GM12878 (cell line): ENCODE measurements at regions of chr4 and their contacts with region 1.

Region 1: DNA sequence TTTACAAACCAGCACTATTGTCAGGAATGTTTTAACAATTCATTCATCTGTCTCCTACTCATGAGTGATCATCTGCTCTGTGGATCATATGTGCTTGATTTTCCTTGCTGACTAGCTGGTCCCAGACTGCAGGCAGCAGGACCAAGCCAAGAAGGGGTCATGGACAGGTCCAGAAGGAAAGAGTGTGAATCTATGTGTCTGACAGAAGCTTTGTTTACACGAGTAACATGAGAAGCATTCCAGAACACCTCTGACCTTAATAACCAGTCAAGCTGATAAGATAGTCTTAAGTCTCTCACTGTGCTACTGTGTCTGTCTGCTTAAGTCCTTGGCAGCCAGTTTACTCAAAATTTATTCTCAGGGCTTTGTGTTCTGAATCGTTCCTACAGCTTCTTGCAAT is 39.0 kb downstream of the GUCY1A1 start:
- DNase-seq: no peak
- ATAC-seq: no peak
- H3K4me3 ChIP-seq: no peak overlapping the region
- H3K27ac ChIP-seq: no peak overlapping the region
- H3K4me1 ChIP-seq: no peaks in the 10 kb centered on the region
- H3K27me3 ChIP-seq: no peaks in the 10 kb centered on the region
- CTCF ChIP-seq: no peak
- EP300 ChIP-seq: no peak
- POLR2A ChIP-seq: no peak
- RAD21 ChIP-seq: no peak

Region 2: GRCh38 chr4:155629183-155629825 is 76.4 kb before region 1 on chr4:
- CTCF ChIA-PET with region 1: interaction called, 4 read pairs
- POLR2A ChIA-PET with region 1: interaction called, 3 read pairs
- RAD21 ChIA-PET with region 1: interaction called, 4 read pairs
- SMC1A ChIA-PET with region 1: interaction called, 12 read pairs
- in situ Hi-C with region 1: no loop called
- intact Hi-C with region 1: no loop called
- DNase-seq: no peak
- ATAC-seq: peak; percentile 19; the same call in 2 of the 3 replicates
- H3K4me3 ChIP-seq: no peak overlapping the region
- H3K27ac ChIP-seq: no peak overlapping the region
- H3K4me1 ChIP-seq: no peaks in the 10 kb centered on the region
- H3K27me3 ChIP-seq: no peaks in the 10 kb centered on the region
- CTCF ChIP-seq: no peak
- EP300 ChIP-seq: no peak
- POLR2A ChIP-seq: no peak
- RAD21 ChIP-seq: no peak

Region 3: GRCh38 chr4:155675709-155676429 is 29.8 kb before region 1 on chr4:
- CTCF ChIA-PET with region 1: interaction called, 13 read pairs
- POLR2A ChIA-PET with region 1: interaction called, 13 read pairs
- RAD21 ChIA-PET with region 1: interaction called, 29 read pairs
- SMC1A ChIA-PET with region 1: interaction called, 57 read pairs
- in situ Hi-C with region 1: no loop called
- intact Hi-C with region 1: no loop called
- DNase-seq: no peak
- ATAC-seq: peak; percentile 86
- H3K4me3 ChIP-seq: no peak overlapping the region
- H3K27ac ChIP-seq: no peak overlapping the region
- H3K4me1 ChIP-seq: no peaks in the 10 kb centered on the region
- H3K27me3 ChIP-seq: no peaks in the 10 kb centered on the region
- CTCF ChIP-seq: no peak
- EP300 ChIP-seq: no peak
- POLR2A ChIP-seq: no peak
- RAD21 ChIP-seq: no peak

Region 4: DNA sequence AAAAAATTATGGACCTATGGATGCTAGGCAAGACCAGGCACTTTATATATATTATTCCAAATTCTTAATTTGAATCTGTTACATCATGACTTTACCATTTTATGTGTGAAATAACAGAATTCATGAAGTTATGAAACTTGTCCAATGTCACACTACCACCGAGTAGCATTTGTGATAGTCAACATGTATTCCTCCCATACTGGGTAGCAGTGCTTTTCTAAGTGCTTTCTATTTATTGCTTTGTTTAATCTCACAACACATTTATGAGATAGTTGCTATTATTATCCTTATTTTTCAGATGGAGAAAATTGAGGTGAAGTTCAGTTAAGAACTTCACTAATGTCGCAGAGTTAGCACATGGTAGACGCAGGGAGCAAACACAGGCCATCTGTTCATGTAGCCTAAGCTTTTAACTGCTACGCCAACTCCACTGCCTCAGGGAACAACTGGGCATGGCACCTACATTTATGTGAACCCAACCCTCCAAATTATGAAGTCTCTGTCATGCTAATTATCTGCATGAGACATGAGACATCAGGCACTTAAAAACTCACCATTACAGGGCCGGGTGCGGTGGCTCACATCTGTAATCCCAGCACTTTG is 18.2 kb before region 1 on chr4:
- CTCF ChIA-PET with region 1: interaction called, 4 read pairs
- POLR2A ChIA-PET with region 1: interaction called, 7 read pairs
- RAD21 ChIA-PET with region 1: interaction called, 8 read pairs
- SMC1A ChIA-PET with region 1: interaction called, 48 read pairs
- in situ Hi-C with region 1: no loop called
- intact Hi-C with region 1: no loop called
- DNase-seq: no peak
- ATAC-seq: no peak
- H3K4me3 ChIP-seq: no peak overlapping the region
- H3K27ac ChIP-seq: no peak overlapping the region
- H3K4me1 ChIP-seq: no peaks in the 10 kb centered on the region
- H3K27me3 ChIP-seq: no peaks in the 10 kb centered on the region
- CTCF ChIP-seq: no peak
- EP300 ChIP-seq: no peak
- POLR2A ChIP-seq: no peak
- RAD21 ChIP-seq: no peak

Region 5: GRCh38 chr4:155693015-155693663 is 12.5 kb before region 1 on chr4:
- CTCF ChIA-PET with region 1: interaction called, 4 read pairs
- POLR2A ChIA-PET with region 1: interaction called, 8 read pairs
- RAD21 ChIA-PET with region 1: interaction called, 12 read pairs
- SMC1A ChIA-PET with region 1: interaction called, 48 read pairs
- in situ Hi-C with region 1: no loop called
- intact Hi-C with region 1: no loop called
- DNase-seq: no peak
- ATAC-seq: peak; percentile 25; the same call in 2 of the 3 replicates
- H3K4me3 ChIP-seq: no peak overlapping the region
- H3K27ac ChIP-seq: no peak overlapping the region
- H3K4me1 ChIP-seq: no peaks in the 10 kb centered on the region
- H3K27me3 ChIP-seq: no peaks in the 10 kb centered on the region
- CTCF ChIP-seq: no peak
- EP300 ChIP-seq: no peak
- POLR2A ChIP-seq: no peak
- RAD21 ChIP-seq: no peak

Region 6: GRCh38 chr4:155734065-155734464 is 28.4 kb after region 1 on chr4:
- CTCF ChIA-PET with region 1: interaction called, 3 read pairs
- POLR2A ChIA-PET with region 1: interaction called, 3 read pairs
- RAD21 ChIA-PET with region 1: interaction called, 3 read pairs
- SMC1A ChIA-PET with region 1: interaction called, 48 read pairs
- in situ Hi-C with region 1: no loop called
- intact Hi-C with region 1: no loop called
- DNase-seq: no peak
- ATAC-seq: no peak
- H3K4me3 ChIP-seq: no peak overlapping the region
- H3K27ac ChIP-seq: no peak overlapping the region
- H3K4me1 ChIP-seq: no peaks in the 10 kb centered on the region
- H3K27me3 ChIP-seq: no peaks in the 10 kb centered on the region
- CTCF ChIP-seq: no peak
- EP300 ChIP-seq: no peak
- POLR2A ChIP-seq: no peak
- RAD21 ChIP-seq: no peak